ENCODE measurements at regions of chr12 and their contacts with region 1.

Region 1: GRCh38 chr12:113462117-113462774 is 9.4 kb downstream of the LHX5 start:
- DNase-seq: peak; percentile 81
- H3K4me3 ChIP-seq: peak overlapping the region in 1 of 4 donors; percentile 45
- H3K27ac ChIP-seq: no peak overlapping the region
- H3K4me1 ChIP-seq: peaks cover 8 to 38% (median 33%) of the 10 kb centered on the region in 4 donors
- H3K27me3 ChIP-seq: peaks cover 100% of the 10 kb centered on the region
- CTCF ChIP-seq: peak; percentile 61 to 87 (median 76)
- EP300 ChIP-seq: no peak
- POLR2A ChIP-seq: no peak

Region 2: GRCh38 chr12:113555236-113555635 is 93.0 kb after region 1 on chr12:
- in situ Hi-C with region 1: no loop called
- intact Hi-C with region 1: no loop called
- DNase-seq: no peak
- H3K4me3 ChIP-seq: no peak overlapping the region
- H3K27ac ChIP-seq: no peak overlapping the region
- H3K4me1 ChIP-seq: no peaks in the 10 kb centered on the region
- H3K27me3 ChIP-seq: peaks cover 7% of the 10 kb centered on the region
- CTCF ChIP-seq: no peak
- EP300 ChIP-seq: no peak
- POLR2A ChIP-seq: no peak

Region 3: GRCh38 chr12:113862590-113863454 is 400.6 kb after region 1 on chr12:
- in situ Hi-C with region 1: no loop called
- intact Hi-C with region 1: no loop called
- DNase-seq: no peak
- H3K4me3 ChIP-seq: no peak overlapping the region
- H3K27ac ChIP-seq: no peak overlapping the region
- H3K4me1 ChIP-seq: no peaks in the 10 kb centered on the region
- H3K27me3 ChIP-seq: no peaks in the 10 kb centered on the region
- CTCF ChIP-seq: no peak
- EP300 ChIP-seq: no peak
- POLR2A ChIP-seq: no peak

Region 4: DNA sequence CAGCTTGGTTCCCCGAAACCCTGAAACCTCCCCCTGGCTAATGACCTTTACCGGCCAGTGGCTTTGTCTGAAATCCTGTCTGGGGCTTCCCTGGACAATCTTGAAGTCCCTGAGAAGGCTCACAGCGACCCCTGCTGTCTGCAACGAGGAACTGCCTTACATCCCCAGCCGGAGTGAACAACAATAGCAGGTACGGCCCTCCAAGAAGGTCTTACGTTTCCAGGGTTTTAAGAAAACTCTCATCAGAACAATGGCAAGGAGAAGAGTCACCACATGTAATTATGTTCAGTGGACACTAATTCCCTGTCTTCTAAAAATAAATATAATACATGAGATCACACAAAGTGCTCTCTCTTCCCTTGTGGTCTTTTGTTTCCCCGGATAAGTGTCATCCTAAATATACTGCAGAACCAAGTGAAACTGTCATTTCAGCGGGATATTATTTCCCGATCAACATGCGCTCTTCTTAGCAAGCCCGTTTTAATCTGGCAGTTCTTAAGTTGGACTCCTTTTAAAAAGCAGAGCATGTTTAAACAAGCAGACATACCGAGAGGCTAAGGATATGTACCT is 450.6 kb after region 1 on chr12:
- in situ Hi-C with region 1: loop called in 2 of 4 experiments (anchors 25 kb)
- intact Hi-C with region 1: loop called (anchors 10 kb)
- DNase-seq: peak; percentile 58
- H3K4me3 ChIP-seq: no peak overlapping the region
- H3K27ac ChIP-seq: no peak overlapping the region
- H3K4me1 ChIP-seq: no peaks in the 10 kb centered on the region
- H3K27me3 ChIP-seq: no peaks in the 10 kb centered on the region
- CTCF ChIP-seq: peak; percentile 71 to 83 (median 77)
- EP300 ChIP-seq: no peak
- POLR2A ChIP-seq: no peak

Measured in transverse colon (tissue), 4 donors.